PC-9 (cell line): ENCODE measurements at regions of chr16 and their contacts with region 1.

Region 1: GRCh38 chr16:54152362-54153239 is 134.0 kb downstream of the IRX3 start:
- DNase-seq: no peak
- H3K4me3 ChIP-seq: no peak overlapping the region
- H3K27ac ChIP-seq: no peak overlapping the region
- H3K4me1 ChIP-seq: no peaks in the 10 kb centered on the region
- H3K27me3 ChIP-seq: no peaks in the 10 kb centered on the region
- CTCF ChIP-seq: no peak

Region 2: GRCh38 chr16:53558710-53559109 is 593.9 kb before region 1 on chr16:
- CTCF ChIA-PET with region 1: no interaction called
- POLR2A ChIA-PET with region 1: no interaction called
- intact Hi-C with region 1: no loop called
- DNase-seq: no peak
- H3K4me3 ChIP-seq: no peak overlapping the region
- H3K27ac ChIP-seq: no peak overlapping the region
- H3K4me1 ChIP-seq: no peaks in the 10 kb centered on the region
- H3K27me3 ChIP-seq: no peaks in the 10 kb centered on the region
- CTCF ChIP-seq: no peak

Region 3: GRCh38 chr16:54080524-54081008 is 72.0 kb before region 1 on chr16:
- CTCF ChIA-PET with region 1: no interaction called
- POLR2A ChIA-PET with region 1: no interaction called
- intact Hi-C with region 1: no loop called
- DNase-seq: peak; percentile 50 to 99
- H3K4me3 ChIP-seq: peak overlapping the region; percentile 8; the same call in 1 of the 2 replicates
- H3K27ac ChIP-seq: peak overlapping the region; percentile 92
- H3K4me1 ChIP-seq: peaks cover 63% of the 10 kb centered on the region
- H3K27me3 ChIP-seq: no peaks in the 10 kb centered on the region
- CTCF ChIP-seq: no peak

Region 4: DNA sequence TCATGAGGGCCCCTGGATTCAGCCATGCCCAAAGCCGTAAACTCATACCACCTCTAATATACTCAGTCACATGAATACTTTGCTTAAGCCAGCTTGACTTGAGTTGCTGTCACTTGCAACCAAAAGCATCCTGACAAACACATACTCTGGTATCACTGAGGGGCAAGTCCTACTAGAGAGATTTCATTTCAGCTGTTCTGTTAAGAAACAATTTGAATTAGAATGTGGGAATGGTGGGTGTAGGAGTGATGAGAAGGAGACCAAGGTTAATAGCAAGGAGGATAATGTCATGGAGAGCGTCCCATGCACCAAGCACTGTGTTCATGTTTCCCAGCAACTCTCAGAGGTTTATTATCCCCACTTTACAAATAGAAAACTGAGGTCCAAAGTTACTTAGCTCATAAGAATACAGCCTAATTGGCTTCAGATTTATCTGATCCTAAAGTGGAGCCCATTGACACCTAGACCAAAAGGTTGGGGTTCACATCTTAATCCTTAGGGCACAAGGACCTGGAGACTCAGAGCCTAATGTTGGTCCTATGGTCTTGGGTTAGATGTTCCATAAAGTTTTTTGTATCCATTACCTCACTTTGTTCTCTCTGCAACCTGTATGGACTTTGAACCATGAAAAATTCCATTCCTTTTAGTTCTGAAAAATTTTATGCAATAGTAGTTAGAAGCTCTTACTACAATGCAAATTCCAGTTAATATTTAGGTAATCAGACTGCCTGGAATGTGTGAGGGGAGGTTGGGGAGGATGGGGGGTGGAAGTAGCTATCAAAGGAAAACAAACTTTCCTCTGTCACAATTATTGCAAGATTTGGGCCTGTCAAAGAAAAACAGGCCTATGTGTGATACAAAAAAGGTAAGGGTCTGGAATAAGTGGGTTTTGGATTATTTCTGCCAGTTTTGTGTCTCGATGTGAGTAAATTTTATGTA is 28.1 kb after region 1 on chr16:
- CTCF ChIA-PET with region 1: no interaction called
- POLR2A ChIA-PET with region 1: interaction called, 13 read pairs
- intact Hi-C with region 1: no loop called
- DNase-seq: no peak
- H3K4me3 ChIP-seq: no peak overlapping the region
- H3K27ac ChIP-seq: no peak overlapping the region
- H3K4me1 ChIP-seq: no peaks in the 10 kb centered on the region
- H3K27me3 ChIP-seq: no peaks in the 10 kb centered on the region
- CTCF ChIP-seq: no peak

Region 5: DNA sequence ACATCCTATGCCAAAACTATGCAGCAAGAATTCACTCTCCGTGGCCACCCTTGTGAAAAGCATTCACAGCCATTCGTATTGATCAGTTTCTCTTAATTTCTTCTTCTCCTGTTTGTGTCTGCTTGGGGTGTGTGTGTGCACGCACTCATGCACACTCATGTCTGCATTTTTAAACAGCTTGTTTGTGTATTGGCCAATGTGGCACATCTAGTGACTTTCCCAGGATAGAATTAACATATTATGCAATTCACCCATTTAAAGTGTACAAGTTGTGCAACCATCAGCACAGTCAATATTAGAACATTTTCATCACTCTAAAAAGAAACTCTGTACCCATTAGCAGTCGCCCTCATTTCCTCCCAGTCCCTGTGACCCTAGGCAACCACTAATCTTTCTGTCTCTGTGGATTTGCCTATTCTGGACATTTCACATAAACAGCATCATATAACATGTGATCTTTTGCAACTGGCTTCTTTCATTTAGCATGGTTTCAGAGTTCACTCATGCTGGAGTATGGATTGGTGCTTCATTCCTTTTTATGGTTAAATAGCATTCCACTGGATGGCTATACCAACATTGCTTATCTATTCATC is 113.9 kb after region 1 on chr16:
- CTCF ChIA-PET with region 1: no interaction called
- POLR2A ChIA-PET with region 1: no interaction called
- intact Hi-C with region 1: no loop called
- DNase-seq: peak in 1 of 2 experiments; percentile 55
- H3K4me3 ChIP-seq: no peak overlapping the region
- H3K27ac ChIP-seq: no peak overlapping the region
- H3K4me1 ChIP-seq: peaks cover 13% of the 10 kb centered on the region; the same call in 1 of the 2 replicates
- H3K27me3 ChIP-seq: no peaks in the 10 kb centered on the region
- CTCF ChIP-seq: no peak

Region 6: GRCh38 chr16:55171241-55171640 is 1018.6 kb after region 1 on chr16:
- CTCF ChIA-PET with region 1: no interaction called
- POLR2A ChIA-PET with region 1: no interaction called
- intact Hi-C with region 1: no loop called
- DNase-seq: no peak
- H3K4me3 ChIP-seq: no peak overlapping the region
- H3K27ac ChIP-seq: no peak overlapping the region
- H3K4me1 ChIP-seq: no peaks in the 10 kb centered on the region
- H3K27me3 ChIP-seq: no peaks in the 10 kb centered on the region
- CTCF ChIP-seq: no peak